ENCODE measurements at regions of chr10 and their contacts with region 1.

Region 1: GRCh38 chr10:63268798-63269503 is 135.8 kb downstream of the NRBF2 start:
- DNase-seq: peak; percentile 98
- ATAC-seq: peak; percentile 96
- H3K4me3 ChIP-seq: peak overlapping the region; percentile 77 to 91
- H3K27ac ChIP-seq: peak overlapping the region; percentile 95
- H3K4me1 ChIP-seq: peaks cover 18% of the 10 kb centered on the region
- H3K27me3 ChIP-seq: no peaks in the 10 kb centered on the region
- CTCF ChIP-seq: no peak

Region 2: DNA sequence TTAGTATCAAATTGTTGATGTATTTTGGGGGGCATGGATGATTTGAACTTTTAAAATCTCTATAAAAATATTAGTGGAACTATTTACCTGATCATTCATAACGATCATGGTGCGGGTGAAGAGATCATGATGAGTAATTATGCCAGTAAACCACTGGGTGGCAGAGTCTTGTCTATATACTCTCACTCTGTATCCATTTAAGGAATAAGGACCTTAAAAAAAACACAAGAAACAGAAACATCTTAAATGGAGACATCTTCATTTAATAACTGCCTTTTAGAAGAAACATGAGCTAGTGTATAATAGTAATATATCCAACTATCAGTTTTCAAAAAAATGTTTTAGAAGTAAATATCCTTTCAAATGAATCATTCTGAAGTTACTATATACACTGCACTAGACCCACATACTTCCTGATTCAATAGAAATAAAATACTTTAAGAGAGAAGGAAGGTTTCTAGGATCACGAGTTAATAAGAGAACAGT is 51.8 kb before region 1 on chr10:
- CTCF ChIA-PET with region 1: interaction called, 3 read pairs
- POLR2A ChIA-PET with region 1: no interaction called
- in situ Hi-C with region 1: no loop called
- intact Hi-C with region 1: loop called (anchors 5 kb)
- DNase-seq: peak; percentile 41
- ATAC-seq: peak; percentile 95
- H3K4me3 ChIP-seq: no peak overlapping the region
- H3K27ac ChIP-seq: peak overlapping the region; percentile 21; the same call in 1 of the 2 replicates
- H3K4me1 ChIP-seq: peaks cover 18% of the 10 kb centered on the region; the same call in 1 of the 2 replicates
- H3K27me3 ChIP-seq: no peaks in the 10 kb centered on the region
- CTCF ChIP-seq: peak; percentile 76; the same call in 1 of the 2 replicates

Region 3: DNA sequence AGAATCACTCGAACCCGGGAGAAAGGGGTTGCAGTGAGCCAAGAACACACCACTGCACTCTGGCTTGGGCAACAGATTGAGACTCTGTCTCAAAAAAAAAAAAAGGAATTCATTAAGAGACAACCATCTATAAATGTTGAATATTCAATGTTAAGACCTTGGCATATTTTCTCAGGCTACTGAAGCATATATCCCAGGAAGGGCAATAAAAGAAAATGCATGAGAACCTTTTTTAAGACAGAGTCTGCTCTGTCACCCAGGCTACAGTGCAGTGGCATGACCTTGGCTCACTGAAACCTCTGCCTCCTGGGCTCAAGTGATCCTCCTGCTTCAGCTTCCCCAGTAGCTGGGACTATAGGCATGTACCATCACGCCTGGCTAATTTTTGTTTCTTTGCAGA is 31.9 kb after region 1 on chr10:
- CTCF ChIA-PET with region 1: no interaction called
- POLR2A ChIA-PET with region 1: interaction called, 10 read pairs
- in situ Hi-C with region 1: no loop called
- intact Hi-C with region 1: no loop called
- DNase-seq: no peak
- ATAC-seq: no peak
- H3K4me3 ChIP-seq: no peak overlapping the region
- H3K27ac ChIP-seq: no peak overlapping the region
- H3K4me1 ChIP-seq: no peaks in the 10 kb centered on the region
- H3K27me3 ChIP-seq: no peaks in the 10 kb centered on the region
- CTCF ChIP-seq: no peak

Region 4: DNA sequence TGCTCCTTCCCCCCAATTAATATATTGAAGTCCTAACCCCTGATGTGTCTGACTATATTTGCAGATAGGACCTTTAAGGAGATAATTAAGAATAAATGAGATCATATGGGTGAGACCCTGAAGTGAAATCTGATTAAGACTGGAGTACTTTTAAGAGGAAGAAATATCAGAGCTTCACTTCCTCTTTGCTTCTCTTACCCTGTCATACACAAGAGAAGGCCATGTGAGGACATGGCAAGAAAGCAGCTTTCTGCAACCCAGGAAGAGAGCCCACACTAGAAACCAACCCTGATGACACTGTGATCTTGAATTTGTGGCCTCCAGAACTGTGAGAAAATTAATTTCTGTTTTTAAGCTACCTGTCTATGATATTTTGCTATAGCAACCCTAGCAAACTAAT is 152.6 kb after region 1 on chr10:
- CTCF ChIA-PET with region 1: no interaction called
- POLR2A ChIA-PET with region 1: no interaction called
- in situ Hi-C with region 1: no loop called
- intact Hi-C with region 1: no loop called
- DNase-seq: no peak
- ATAC-seq: no peak; the same call in 1 of the 2 replicates
- H3K4me3 ChIP-seq: no peak overlapping the region
- H3K27ac ChIP-seq: no peak overlapping the region
- H3K4me1 ChIP-seq: peaks cover 16% of the 10 kb centered on the region
- H3K27me3 ChIP-seq: no peaks in the 10 kb centered on the region
- CTCF ChIP-seq: no peak

Measured in Panc1 (cell line).